ENCODE measurements at regions of chr2 and their contacts with region 1.

Region 1: GRCh38 chr2:157876066-157876787 is at the start of gene ACVR1:
- DNase-seq: peak; percentile 94
- H3K4me3 ChIP-seq: peak within 1 kb of the TSS; percentile 61
- CTCF ChIP-seq: no peak

Region 2: DNA sequence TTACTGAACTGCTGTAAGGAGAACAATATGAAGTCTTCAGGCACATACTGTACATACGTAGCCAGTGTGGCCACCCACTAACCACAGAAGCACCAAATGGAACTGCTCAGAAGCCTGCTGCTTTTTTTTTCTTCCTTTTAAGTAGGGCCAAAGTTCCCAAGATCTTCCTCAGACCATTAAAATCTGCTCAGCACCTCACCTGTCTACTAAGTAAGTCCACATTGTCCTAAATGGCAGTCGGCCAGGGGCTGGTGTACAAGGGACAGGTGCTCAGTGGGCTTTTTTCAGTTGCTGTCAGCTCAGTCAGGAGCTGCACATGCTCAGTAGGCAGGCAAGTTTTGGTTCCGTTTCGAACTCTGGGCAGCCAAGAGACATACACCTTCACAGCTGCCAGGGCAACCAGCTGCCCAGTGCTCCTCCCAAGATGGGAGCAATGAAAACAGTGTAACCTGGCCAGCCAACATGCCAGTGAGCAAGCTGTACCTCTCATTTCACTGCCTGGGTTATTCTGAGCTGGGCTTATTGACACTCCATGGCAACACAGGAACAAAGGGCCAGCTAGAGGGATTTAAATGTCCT is 86.2 kb before region 1 on chr2:
- in situ Hi-C with region 1: loop called (anchors 5 kb)
- DNase-seq: no peak
- H3K4me3 ChIP-seq: no peak overlapping the region
- CTCF ChIP-seq: no peak

Measured in astrocyte of the cerebellum (primary cell).